AG04449 (cell line): ENCODE measurements at regions of chr3 and their contacts with region 1.

Region 1: GRCh38 chr3:98817547-98818041 is 54.5 kb downstream of the ST3GAL6 start:
- DNase-seq: no peak
- H3K4me3 ChIP-seq: no peak overlapping the region
- CTCF ChIP-seq: peak; percentile 10

Region 2: DNA sequence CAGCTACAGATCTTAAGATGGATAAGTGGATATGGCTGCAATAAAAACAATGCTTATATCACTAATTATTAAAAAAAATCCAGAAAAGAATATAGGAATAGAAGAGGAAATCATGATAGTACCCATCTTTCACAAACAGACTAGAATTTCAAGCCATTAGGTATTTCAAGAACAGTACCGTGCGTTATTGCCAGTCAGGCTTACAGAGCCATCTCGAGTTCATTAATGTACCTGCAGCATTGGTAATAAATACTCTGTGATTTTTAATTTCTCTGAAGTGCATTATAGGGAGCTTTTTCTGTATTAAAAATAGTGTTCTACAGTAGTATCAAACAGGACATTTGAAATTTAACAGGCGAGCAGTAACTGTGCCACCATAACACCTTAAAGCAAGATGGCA is 18.8 kb before region 1 on chr3:
- CTCF ChIA-PET with region 1: interaction called, 21 read pairs
- POLR2A ChIA-PET with region 1: no interaction called
- DNase-seq: no peak
- H3K4me3 ChIP-seq: no peak overlapping the region
- CTCF ChIP-seq: no peak

Region 3: DNA sequence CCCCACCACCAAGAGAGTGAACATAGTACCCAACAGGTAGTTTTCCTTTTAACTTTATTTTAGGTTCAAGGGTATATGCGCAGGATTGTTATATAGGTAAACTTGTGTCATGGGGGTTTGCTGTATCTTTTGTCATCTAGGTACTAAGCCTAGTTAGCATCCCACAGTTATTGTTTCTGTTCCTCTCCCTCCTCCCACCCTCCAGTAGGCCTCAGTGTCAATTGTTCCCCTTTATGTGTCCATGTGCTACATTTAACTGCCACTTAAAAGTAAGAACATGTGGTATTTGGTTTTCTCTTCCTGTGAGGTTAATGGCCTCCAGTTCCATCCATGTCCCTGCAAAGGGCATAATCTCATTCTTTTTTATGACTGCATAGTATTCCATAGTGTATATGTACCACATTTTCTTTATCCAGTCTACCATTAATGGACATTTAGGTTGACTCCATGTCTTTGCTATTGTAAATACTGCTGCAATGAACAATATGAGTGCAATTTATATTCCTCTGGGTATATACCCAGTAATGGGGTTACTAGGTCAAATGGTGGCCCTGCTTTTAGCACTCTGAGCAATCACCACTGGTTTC is 11.7 kb after region 1 on chr3:
- CTCF ChIA-PET with region 1: interaction called, 18 read pairs
- POLR2A ChIA-PET with region 1: interaction called, 3 read pairs
- DNase-seq: no peak
- H3K4me3 ChIP-seq: no peak overlapping the region
- CTCF ChIP-seq: no peak

Region 4: DNA sequence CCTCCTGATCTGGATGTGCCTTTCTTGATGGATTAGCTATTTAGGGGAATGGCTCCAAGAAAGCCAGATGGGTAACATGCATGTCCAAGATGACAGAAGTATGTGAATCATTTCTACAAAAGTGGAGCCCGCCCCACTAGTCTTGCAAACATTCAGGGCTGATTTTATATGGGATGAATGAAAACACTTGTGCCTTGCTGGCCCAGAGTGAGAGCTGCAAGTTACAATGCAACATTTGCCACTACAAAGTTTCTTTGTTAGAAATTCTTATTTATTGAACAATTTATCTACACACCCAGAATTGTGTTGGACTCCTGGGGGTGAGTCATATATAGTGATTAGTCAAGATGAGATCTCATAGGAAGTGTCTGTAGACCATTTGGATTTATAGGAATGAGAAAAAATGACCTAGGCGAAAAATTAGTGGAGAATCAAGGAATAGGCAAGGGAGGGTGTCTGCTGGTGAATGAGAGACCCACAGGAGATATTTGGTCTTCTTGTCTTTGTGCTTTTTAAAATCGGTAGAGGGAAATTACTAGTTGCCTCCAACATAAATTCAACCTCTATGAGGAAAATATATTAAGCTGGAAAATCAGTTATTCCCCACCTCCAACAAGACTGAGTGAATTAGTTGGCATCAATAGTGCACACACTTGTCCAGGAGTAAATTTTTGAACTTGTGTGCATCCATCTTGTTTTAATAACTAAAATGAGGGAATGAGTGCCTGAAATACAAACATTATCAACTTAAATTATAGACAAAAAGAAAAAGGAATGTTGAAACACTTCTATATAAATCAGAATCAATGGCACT is 137.4 kb after region 1 on chr3:
- CTCF ChIA-PET with region 1: interaction called, 15 read pairs
- POLR2A ChIA-PET with region 1: no interaction called
- DNase-seq: no peak
- H3K4me3 ChIP-seq: no peak overlapping the region
- CTCF ChIP-seq: no peak

Region 5: GRCh38 chr3:98986073-98986472 is 168.5 kb after region 1 on chr3:
- CTCF ChIA-PET with region 1: interaction called, 394 read pairs
- POLR2A ChIA-PET with region 1: no interaction called
- DNase-seq: peak; percentile 79
- H3K4me3 ChIP-seq: no peak overlapping the region
- CTCF ChIP-seq: no peak